ENCODE measurements at regions of chr1 and their contacts with region 1.

Region 1: DNA sequence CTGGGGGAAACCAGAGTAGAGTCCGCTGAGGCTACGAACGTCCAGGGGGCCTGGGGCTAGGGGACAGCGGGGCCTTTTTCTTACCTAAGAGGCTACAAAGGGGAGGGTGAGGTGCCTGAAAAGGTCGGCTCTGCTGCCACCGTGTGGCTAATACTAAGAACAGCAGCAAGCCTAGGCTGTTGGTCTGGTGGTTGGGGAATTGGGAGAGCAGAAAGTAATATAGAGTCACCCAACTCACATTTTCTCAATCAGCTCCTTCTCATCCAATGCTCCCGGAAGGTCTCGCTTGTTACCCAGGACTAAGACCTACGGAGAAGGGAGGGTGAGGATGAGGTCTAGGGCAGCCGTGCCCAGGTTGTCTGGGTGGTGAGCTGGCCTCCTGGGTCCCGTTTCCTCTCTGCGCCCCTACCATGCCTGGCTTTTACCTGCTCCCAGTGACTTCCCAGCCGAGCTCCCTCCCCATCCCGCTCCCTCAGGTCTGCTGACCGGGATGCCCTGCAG is 9.3 kb downstream of the ARL8A start:
- DNase-seq: no peak
- H3K4me3 ChIP-seq: no peak overlapping the region
- H3K27ac ChIP-seq: peak overlapping the region in 2 of 8 donors; percentile 17 to 26
- H3K4me1 ChIP-seq: peaks cover 0 to 87% (median 27%) of the 10 kb centered on the region in 6 donors
- H3K27me3 ChIP-seq: no peaks in the 10 kb centered on the region
- CTCF ChIP-seq: peak; percentile 53 to 96 (median 87)
- POLR2A ChIP-seq: no peak

Region 2: DNA sequence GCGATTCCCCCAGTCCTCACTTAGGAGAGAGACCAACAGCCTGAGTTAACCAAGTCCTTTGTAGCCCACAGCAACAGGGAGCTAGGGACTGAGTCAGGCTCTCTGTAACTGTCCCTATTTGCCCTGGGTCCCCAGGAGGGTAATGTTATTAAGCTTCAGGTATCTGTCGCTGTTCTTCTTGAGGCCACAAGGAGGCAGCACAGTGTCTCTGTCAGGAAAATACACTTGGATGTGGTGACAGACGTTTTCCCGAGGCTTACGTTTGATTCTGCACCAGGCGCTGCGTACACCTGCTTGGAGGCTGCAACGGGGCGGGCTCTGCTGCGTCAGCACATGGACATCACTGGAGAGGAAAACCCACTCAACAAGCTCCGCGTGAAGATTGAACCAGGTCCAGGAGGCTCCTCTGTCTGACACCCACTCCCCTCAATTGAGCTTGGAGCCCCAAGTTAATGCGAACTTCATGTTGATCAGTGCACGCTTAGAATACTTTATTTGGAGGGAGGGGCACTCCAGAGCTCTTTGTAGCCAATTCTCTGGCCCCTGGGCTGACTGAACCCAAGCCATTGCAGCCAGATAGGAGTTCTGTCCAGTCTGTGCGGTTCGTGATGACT is 135.5 kb before region 1 on chr1:
- intact Hi-C with region 1: loop called (anchors 5 kb)
- DNase-seq: peak; percentile 37
- H3K4me3 ChIP-seq: no peak overlapping the region
- H3K27ac ChIP-seq: no peak overlapping the region
- H3K4me1 ChIP-seq: no peaks in the 10 kb centered on the region
- H3K27me3 ChIP-seq: no peaks in the 10 kb centered on the region
- CTCF ChIP-seq: peak; percentile 22 to 76 (median 53)
- POLR2A ChIP-seq: no peak

Region 3: DNA sequence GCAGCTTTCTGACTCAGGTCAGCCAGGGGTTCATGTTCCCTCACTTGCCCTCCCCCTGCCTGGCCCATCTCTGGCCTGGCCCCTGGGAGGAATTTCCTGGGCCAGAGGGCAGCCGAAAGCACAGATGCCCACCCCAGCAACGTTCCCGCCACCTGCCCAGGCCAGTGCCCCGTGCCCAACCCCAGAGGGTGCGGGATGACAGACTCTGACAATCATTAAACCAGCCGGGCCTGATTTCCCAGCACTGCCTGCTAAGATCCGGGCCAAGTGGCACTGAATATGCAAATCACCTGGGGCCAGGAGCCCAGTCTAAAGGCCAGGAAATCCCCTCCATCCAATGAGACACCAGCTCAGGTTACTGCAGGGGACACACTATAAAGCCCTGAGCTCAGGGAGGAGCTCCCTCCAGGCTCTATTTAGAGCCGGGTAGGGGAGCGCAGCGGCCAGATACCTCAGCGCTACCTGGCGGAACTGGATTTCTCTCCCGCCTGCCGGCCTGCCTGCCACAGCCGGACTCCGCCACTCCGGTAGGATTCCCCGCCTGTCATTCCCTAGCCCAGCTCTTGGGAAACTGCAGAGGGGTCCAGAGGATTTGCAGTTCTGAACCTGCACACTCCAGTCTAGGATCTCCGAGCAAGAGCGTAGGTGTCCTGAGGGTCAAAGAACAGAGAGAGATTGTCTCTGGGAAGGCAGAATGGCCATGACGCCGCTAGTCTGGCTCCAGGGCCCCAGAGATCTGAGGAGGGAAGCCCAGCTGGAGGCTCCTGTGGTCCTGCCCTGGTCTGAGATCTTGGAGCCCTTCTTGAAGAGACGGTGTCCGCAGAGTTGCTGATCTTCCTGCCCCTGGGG is 124.9 kb before region 1 on chr1 and contains the start of gene ELF3:
- intact Hi-C with region 1: no loop called
- DNase-seq: peak; percentile 61
- H3K4me3 ChIP-seq: no peak within 1 kb of the TSS
- H3K27ac ChIP-seq: no peak within 1 kb of the TSS
- H3K4me1 ChIP-seq: peaks cover 0 to 9% (median 0%) of the 10 kb centered on the region in 6 donors
- H3K27me3 ChIP-seq: no peaks in the 10 kb centered on the region
- CTCF ChIP-seq: no peak
- POLR2A ChIP-seq: no peak
- total RNA-seq, gene ELF3: 0.43 to 2.9 (median 1.2) TPM

Measured in spleen (tissue), 13 donors.